HepG2 (cell line): ENCODE measurements at regions of chr17 and their contacts with region 1.

Region 1: DNA sequence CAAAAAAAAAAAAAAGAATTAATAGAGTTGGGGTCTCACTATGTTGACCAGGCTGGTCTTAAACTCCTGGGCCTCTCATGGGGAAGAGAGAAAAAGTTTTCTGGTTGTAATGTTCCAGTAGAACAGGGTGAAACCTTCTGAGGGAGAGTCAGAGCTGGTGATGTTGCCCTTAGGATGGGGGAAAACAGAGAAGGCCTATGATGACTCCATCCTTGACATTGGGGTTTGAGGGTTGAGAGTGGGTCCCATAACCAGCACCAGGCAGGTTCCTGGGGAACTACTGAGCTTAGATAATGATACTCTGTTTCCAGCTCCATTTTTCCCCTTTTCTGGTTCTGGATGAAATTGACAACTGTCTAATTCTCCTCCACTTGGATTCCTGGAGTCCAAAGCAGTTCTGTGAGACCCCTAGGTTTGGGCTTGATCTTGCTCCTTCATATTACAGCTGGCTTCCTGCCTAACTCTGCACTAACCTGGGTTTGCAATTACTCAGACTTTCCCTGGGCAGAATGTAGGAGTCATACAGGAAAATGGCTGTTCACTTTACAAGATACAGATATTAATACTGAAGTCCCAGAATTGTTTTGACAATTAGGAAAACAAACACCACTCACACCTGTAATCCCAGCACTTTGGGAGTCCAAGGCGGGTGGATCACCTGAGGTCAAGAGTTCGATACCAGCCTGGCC is 62.8 kb upstream of the B4GALNT2 start:
- DNase-seq: no peak
- ATAC-seq: no peak
- H3K4me3 ChIP-seq: no peak overlapping the region
- H3K27ac ChIP-seq: peak overlapping the region; percentile 99
- H3K4me1 ChIP-seq: peaks cover 59% of the 10 kb centered on the region
- H3K27me3 ChIP-seq: no peaks in the 10 kb centered on the region
- CTCF ChIP-seq: no peak
- EP300 ChIP-seq: no peak
- POLR2A ChIP-seq: no peak
- RAD21 ChIP-seq: no peak

Region 2: GRCh38 chr17:48944519-48945260 is 125.0 kb before region 1 on chr17 and contains the start of gene SNF8:
- CTCF ChIA-PET with region 1: no interaction called
- POLR2A ChIA-PET with region 1: interaction called, 10 read pairs
- in situ Hi-C with region 1: no loop called
- intact Hi-C with region 1: no loop called
- DNase-seq: peak; percentile 90
- ATAC-seq: peak; percentile 97
- H3K4me3 ChIP-seq: peak within 1 kb of the TSS; percentile 75 to 91 (median 90)
- H3K27ac ChIP-seq: peak within 1 kb of the TSS; percentile 86
- H3K4me1 ChIP-seq: peaks cover 27% of the 10 kb centered on the region
- H3K27me3 ChIP-seq: no peaks in the 10 kb centered on the region; a peak in 1 of 5 replicates
- CTCF ChIP-seq: peak; percentile 35; the same call in 1 of the 2 replicates
- EP300 ChIP-seq: no peak; a peak in 1 of 4 replicates
- POLR2A ChIP-seq: peak; percentile 91 to 92
- RAD21 ChIP-seq: peak; percentile 71; the same call in 1 of the 2 replicates
- total RNA-seq, gene SNF8: 152 and 153 TPM in 2 replicates

Region 3: GRCh38 chr17:49108318-49108717 is 38.6 kb after region 1 on chr17:
- CTCF ChIA-PET with region 1: no interaction called
- POLR2A ChIA-PET with region 1: interaction called, 20 read pairs
- in situ Hi-C with region 1: no loop called
- intact Hi-C with region 1: loop called (anchors 2 kb)
- DNase-seq: no peak
- ATAC-seq: no peak
- H3K4me3 ChIP-seq: no peak overlapping the region
- H3K27ac ChIP-seq: no peak overlapping the region
- H3K4me1 ChIP-seq: peaks cover 50% of the 10 kb centered on the region
- H3K27me3 ChIP-seq: no peaks in the 10 kb centered on the region
- CTCF ChIP-seq: no peak
- EP300 ChIP-seq: no peak
- POLR2A ChIP-seq: no peak
- RAD21 ChIP-seq: no peak

Region 4: GRCh38 chr17:49132699-49133364 is 63.1 kb after region 1 on chr17 and contains the start of gene B4GALNT2:
- CTCF ChIA-PET with region 1: no interaction called
- POLR2A ChIA-PET with region 1: no interaction called
- in situ Hi-C with region 1: no loop called
- intact Hi-C with region 1: loop called (anchors 5 kb)
- DNase-seq: no peak
- ATAC-seq: peak; percentile 87
- H3K4me3 ChIP-seq: peak within 1 kb of the TSS; percentile 46 to 73 (median 62)
- H3K27ac ChIP-seq: no peak within 1 kb of the TSS
- H3K4me1 ChIP-seq: peaks cover 17% of the 10 kb centered on the region
- H3K27me3 ChIP-seq: peaks cover 13 to 48% of the 10 kb centered on the region in 2 experiments
- CTCF ChIP-seq: no peak
- EP300 ChIP-seq: no peak
- POLR2A ChIP-seq: no peak
- RAD21 ChIP-seq: no peak
- total RNA-seq, gene B4GALNT2: not detected in 2 replicates

Region 5: DNA sequence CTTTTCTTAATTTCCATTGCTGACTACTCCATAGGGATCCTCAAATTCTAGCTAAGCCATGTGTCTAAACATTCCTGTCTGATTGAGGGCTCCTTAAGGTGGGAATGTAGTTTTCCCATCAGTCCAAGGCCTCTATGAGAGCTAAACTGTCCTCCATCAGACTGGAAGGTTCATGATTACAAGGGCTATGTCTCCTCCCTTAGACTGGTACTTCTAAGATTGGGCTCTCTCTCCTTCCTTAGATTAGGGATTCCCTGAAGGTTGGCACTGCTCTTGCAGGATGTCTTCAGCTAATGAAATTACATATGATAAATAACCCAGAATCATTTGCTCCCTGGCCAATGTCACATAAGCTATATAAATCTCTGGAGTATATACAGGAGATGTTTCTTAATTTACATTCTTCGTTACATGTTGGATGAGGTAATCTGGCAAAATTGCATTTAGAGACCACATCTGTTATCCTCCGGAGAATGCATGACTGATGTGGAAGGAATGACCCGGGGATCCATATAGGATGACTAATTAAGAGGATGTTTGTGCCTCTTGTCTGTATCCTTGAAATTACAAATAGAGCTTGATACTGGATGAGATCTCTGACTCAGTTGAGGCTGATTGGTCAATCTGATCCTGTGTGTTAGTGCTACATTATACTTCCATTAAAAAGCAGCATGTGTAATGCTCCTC is 77.0 kb after region 1 on chr17:
- CTCF ChIA-PET with region 1: no interaction called
- POLR2A ChIA-PET with region 1: no interaction called
- in situ Hi-C with region 1: no loop called
- intact Hi-C with region 1: loop called (anchors 5 kb)
- DNase-seq: peak; percentile 65
- ATAC-seq: no peak
- H3K4me3 ChIP-seq: no peak overlapping the region
- H3K27ac ChIP-seq: no peak overlapping the region
- H3K4me1 ChIP-seq: peaks cover 32% of the 10 kb centered on the region
- H3K27me3 ChIP-seq: peaks cover under 1 to 10% of the 10 kb centered on the region in 2 experiments; a peak in 2 of 5 replicates
- CTCF ChIP-seq: no peak
- EP300 ChIP-seq: no peak
- POLR2A ChIP-seq: no peak
- RAD21 ChIP-seq: no peak

Region 6: DNA sequence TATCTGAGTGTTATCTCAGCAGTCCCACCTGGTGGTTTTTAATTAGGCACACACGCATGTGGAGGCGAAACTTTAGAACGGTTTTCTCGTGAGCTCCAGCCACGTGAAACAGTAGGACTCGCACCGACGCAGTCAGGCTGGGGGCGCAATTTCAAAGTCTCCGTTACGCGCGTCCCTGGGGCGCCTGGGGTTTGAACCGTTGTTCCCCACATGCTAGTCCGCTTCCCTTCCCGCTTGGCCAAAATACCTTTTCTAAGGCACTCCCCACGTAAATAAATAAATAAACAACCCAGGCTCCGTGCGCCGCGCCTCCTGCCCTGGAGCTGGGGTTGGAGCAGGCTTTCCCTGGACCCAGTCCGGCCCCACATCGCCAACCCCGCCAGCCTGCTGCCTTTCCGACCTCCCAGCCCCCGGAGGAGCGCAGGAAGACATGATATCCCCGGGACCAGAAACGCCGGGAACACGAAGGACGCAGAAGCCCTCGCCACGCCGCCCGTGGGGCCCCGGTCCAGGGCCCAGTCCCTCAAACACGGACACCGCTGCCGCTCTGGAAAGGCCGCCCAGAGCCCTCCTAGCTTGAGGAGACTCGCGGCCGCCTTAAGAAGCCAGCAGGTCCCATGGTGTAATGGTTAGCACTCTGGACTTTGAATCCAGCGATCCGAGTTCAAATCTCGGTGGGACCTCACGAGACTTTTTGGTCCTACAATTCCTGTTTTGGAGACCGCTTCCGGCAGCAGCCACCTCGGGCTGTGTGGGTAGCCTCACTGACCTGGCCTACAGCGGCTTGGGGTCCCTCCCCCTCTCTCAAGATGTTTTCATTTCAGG is 122.4 kb after region 1 on chr17:
- CTCF ChIA-PET with region 1: no interaction called
- POLR2A ChIA-PET with region 1: interaction called, 16 read pairs
- in situ Hi-C with region 1: no loop called
- intact Hi-C with region 1: loop called (anchors 1 kb)
- DNase-seq: peak; percentile 90
- ATAC-seq: peak; percentile 71
- H3K4me3 ChIP-seq: peak overlapping the region; percentile 75 to 80 (median 76)
- H3K27ac ChIP-seq: peak overlapping the region; percentile 88
- H3K4me1 ChIP-seq: peaks cover 18% of the 10 kb centered on the region
- H3K27me3 ChIP-seq: peaks cover 0 to 2% of the 10 kb centered on the region in 2 experiments; a peak in 1 of 5 replicates
- CTCF ChIP-seq: peak; percentile 83
- EP300 ChIP-seq: peak in 1 of 2 experiments; percentile 28; a peak in 1 of 4 replicates
- POLR2A ChIP-seq: peak in 1 of 2 experiments; percentile 57; a peak in 3 of 4 replicates
- RAD21 ChIP-seq: no peak; the same call in none of the 2 replicates